Heart right ventricle (tissue), 16 donors: ENCODE measurements at regions of chr4 and their contacts with region 1.

Region 1: DNA sequence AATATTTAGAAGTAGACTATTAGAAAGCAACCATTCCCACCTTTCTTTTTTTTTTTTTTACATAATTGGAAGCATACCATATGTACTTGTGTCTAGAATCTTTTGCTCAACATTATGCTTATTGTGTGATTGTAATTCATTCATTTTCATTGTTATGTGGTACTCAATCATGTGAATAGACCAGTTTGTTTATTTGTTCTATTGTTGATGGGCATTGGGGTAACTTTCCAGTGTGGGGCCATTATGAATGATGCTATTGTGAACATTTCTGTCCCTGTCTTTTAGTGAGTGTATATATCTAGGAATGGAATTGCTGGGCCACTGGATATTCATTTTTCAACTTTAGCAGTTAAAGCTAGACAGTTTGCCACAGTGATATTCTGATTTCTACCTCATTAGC is 62.5 kb upstream of the MCUB start:
- DNase-seq: no peak
- ATAC-seq: no peak
- H3K4me3 ChIP-seq: no peak overlapping the region
- H3K27ac ChIP-seq: no peak overlapping the region
- H3K4me1 ChIP-seq: peaks cover 0 to 8% (median 0%) of the 10 kb centered on the region in 9 donors
- H3K27me3 ChIP-seq: no peaks in the 10 kb centered on the region
- CTCF ChIP-seq: no peak

Region 2: GRCh38 chr4:109444182-109444844 is 53.2 kb before region 1 on chr4:
- intact Hi-C with region 1: loop called in 5 of 10 experiments (anchors 10 kb)
- DNase-seq: no peak
- ATAC-seq: no peak
- H3K4me3 ChIP-seq: no peak overlapping the region
- H3K27ac ChIP-seq: no peak overlapping the region
- H3K4me1 ChIP-seq: peaks cover 0 to 60% (median 51%) of the 10 kb centered on the region in 9 donors
- H3K27me3 ChIP-seq: no peaks in the 10 kb centered on the region
- CTCF ChIP-seq: no peak

Region 3: DNA sequence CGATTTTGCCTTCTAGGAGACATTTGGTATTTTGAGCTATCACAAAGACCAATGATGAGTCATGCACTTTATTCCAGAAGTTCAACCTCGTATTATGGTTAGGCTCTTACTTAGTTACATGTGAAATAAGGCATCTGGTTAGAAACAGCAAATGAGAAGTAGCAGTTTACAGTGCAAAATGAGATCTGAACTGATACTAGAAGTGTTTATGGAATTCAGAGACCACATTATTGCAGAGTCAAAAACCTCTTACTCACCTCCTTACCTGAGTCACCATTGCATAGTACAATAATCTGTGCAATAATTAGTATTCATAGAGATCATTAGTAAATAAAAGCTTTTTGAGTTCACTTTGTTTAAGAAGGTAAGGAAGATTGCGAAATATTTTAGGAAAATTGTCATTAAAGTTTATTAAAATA is 25.2 kb before region 1 on chr4:
- intact Hi-C with region 1: no loop called
- DNase-seq: no peak
- ATAC-seq: peak in 2 of 8 donors; percentile 46 to 67
- H3K4me3 ChIP-seq: no peak overlapping the region
- H3K27ac ChIP-seq: no peak overlapping the region
- H3K4me1 ChIP-seq: peaks cover 0 to 67% (median 23%) of the 10 kb centered on the region in 9 donors
- H3K27me3 ChIP-seq: no peaks in the 10 kb centered on the region
- CTCF ChIP-seq: no peak